ENCODE measurements at regions of chr1 and their contacts with region 1.

Region 1: DNA sequence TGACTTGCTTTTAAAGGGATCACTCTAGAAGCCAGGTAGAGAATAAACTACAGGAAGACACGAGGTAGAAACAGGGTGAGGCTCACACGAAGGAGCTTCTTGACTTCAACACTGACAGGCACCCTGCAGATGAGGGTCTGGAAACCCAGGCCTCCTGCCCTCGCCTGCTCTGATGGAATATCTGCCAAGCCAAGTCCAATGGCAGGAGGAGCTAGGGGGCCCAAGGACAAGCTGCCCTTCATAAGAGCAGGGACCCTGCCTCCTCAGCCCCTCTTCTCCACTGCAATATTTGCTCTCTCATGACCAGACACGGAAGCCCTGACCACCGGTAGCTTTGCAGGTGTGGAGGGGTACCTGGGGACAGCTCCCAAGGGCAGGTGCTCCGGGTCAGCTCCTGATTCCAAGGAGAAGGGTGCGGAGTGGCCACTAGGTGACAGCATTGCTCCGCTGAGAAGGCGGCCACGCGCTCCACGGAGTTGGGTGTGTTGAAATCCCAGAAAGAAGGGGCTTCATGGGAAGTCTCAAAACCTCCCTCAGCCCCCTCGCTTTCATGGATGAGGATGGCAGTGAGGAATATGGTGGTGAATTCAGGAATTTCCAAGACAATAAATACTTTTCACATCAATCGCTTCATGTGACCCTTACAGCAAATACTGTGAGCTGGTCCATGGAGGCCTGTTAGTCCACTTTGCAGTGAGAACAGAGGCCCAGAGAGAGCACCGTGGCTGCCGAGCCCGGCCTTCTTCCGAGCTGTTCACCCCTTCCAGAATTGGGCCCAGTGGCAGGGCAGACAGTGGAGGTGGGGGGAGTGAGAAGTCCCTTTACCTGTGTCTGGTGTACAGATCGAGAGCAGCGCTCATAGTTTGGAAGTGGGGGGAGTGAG is 33.2 kb upstream of the PAX7 start:
- DNase-seq: peak; percentile 66
- H3K4me3 Mint-ChIP-seq: no peak overlapping the region
- H3K27ac Mint-ChIP-seq: no peak overlapping the region
- H3K4me1 Mint-ChIP-seq: no peaks in the 10 kb centered on the region
- H3K27me3 Mint-ChIP-seq: peaks cover 40% of the 10 kb centered on the region

Region 2: GRCh38 chr1:18560692-18561091 is 36.7 kb before region 1 on chr1:
- CTCF ChIA-PET with region 1: no interaction called
- DNase-seq: no peak
- H3K4me3 Mint-ChIP-seq: no peak overlapping the region
- H3K27ac Mint-ChIP-seq: no peak overlapping the region
- H3K4me1 Mint-ChIP-seq: peaks cover 5% of the 10 kb centered on the region
- H3K27me3 Mint-ChIP-seq: peaks cover 57% of the 10 kb centered on the region

Region 3: DNA sequence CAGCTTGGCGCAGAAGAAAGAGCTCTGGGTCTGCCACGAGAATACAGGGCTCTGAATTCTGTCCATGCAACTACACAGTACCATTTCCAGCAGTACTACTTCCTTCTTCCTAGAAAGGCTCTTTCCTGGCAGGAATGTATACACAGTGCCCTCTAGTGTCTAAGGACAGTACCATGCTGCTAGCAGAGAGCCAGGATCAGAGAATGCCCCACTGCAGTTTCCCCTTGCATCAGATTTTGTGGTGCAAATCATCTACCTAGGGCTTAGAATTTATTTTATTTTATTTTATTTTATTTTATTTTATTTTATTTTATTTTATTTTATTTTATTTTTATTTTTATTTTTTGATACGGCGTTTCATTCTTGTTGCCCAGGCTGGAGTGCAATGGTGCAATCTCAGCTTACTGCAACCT is 84.0 kb after region 1 on chr1:
- CTCF ChIA-PET with region 1: interaction called, 39 read pairs
- DNase-seq: peak; percentile 33
- H3K4me3 Mint-ChIP-seq: no peak overlapping the region
- H3K27ac Mint-ChIP-seq: peak overlapping the region; percentile 77
- H3K4me1 Mint-ChIP-seq: no peaks in the 10 kb centered on the region
- H3K27me3 Mint-ChIP-seq: peaks cover 58% of the 10 kb centered on the region

Region 4: DNA sequence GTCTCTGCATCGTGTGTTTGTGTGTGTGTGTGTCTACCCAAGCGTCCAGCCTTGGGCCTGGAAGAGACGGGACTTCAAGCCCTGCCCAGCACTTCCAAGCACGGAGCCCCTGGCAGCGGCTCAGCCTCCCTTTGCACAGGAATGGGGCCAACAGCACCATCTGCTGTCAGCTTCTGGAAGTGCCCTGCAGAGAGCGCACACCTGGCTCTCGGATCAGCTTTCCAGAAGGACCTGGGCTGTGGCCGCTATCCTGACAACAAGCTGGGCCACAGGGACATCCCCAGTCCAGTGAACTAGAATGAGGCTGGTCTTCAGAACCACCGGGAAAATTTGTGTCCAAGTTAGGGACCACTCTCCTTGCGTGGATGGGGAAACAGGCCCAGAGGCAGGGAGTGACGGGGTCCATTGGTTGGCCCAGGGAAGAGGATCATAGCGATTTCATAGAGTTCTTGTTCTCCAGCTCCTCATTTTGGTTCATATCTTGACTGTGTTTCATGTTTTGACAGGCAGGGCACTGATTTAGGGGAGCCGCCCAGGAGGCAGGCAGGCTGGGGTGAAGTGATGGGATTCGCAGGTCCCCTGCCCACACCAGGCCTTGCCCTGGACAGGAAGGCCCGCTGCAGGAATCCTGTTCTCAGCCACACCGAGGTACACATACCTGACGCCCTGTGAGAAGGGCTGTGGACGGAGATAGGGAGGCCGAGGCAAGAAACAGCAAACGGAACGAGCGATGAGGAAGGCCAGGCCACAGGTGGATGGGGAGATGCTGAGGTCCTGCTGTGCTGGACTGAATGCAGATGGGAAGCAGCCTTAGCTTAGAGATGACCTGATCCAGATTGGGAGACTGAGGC is 223.6 kb after region 1 on chr1:
- CTCF ChIA-PET with region 1: interaction called, 56 read pairs
- DNase-seq: peak; percentile 70
- H3K4me3 Mint-ChIP-seq: no peak overlapping the region
- H3K27ac Mint-ChIP-seq: no peak overlapping the region
- H3K4me1 Mint-ChIP-seq: no peaks in the 10 kb centered on the region
- H3K27me3 Mint-ChIP-seq: peaks cover 46% of the 10 kb centered on the region

Measured in activated naive CD4-positive, alpha-beta T cell treated with anti-CD3 and anti-CD28 coated beads, Interleukin-2, amount 10 ng/mL, durations not matched to agents 7 days and 5 days (primary cell).